ENCODE measurements at regions of chr1 and their contacts with region 1.

Region 1: GRCh38 chr1:150256554-150257341 is 826 bp upstream of the CA14 start:
- DNase-seq: no peak
- H3K4me3 ChIP-seq: no peak overlapping the region
- H3K4me3 Mint-ChIP-seq: peak overlapping the region in 1 of 7 donors; percentile 16
- H3K27ac ChIP-seq: no peak overlapping the region
- H3K27ac Mint-ChIP-seq: peak overlapping the region in 1 of 8 donors; percentile 14
- H3K4me1 ChIP-seq: peaks cover 12% of the 10 kb centered on the region
- H3K4me1 Mint-ChIP-seq: peaks cover 12 to 18% (median 14%) of the 10 kb centered on the region in 3 donors
- H3K27me3 ChIP-seq: peaks cover 16% of the 10 kb centered on the region
- H3K27me3 Mint-ChIP-seq: peaks cover 37 to 45% of the 10 kb centered on the region in 2 donors

Region 2: GRCh38 chr1:150127868-150128267 is 128.9 kb before region 1 on chr1:
- CTCF ChIA-PET with region 1: no interaction called
- POLR2A ChIA-PET with region 1: no interaction called
- DNase-seq: no peak
- H3K4me3 ChIP-seq: no peak overlapping the region
- H3K4me3 Mint-ChIP-seq: no peak overlapping the region
- H3K27ac ChIP-seq: no peak overlapping the region
- H3K27ac Mint-ChIP-seq: peak overlapping the region in 1 of 8 donors; percentile 40
- H3K4me1 ChIP-seq: no peaks in the 10 kb centered on the region
- H3K4me1 Mint-ChIP-seq: peaks cover 0 to 13% (median 4%) of the 10 kb centered on the region in 3 donors
- H3K27me3 ChIP-seq: no peaks in the 10 kb centered on the region
- H3K27me3 Mint-ChIP-seq: no peaks in the 10 kb centered on the region

Region 3: GRCh38 chr1:150268705-150269403 is 12.1 kb after region 1 on chr1 and contains the start of gene APH1A:
- CTCF ChIA-PET with region 1: interaction called, 32 read pairs
- POLR2A ChIA-PET with region 1: no interaction called
- DNase-seq: peak; percentile 87 to 95 (median 88)
- H3K4me3 ChIP-seq: peak within 1 kb of the TSS; percentile 77
- H3K4me3 Mint-ChIP-seq: peak within 1 kb of the TSS; percentile 91 to 98 (median 93)
- H3K27ac ChIP-seq: peak within 1 kb of the TSS; percentile 94
- H3K27ac Mint-ChIP-seq: peak within 1 kb of the TSS; percentile 88 to 100 (median 97)
- H3K4me1 ChIP-seq: peaks cover 24% of the 10 kb centered on the region
- H3K4me1 Mint-ChIP-seq: peaks cover 24 to 35% (median 32%) of the 10 kb centered on the region in 3 donors
- H3K27me3 ChIP-seq: no peaks in the 10 kb centered on the region
- H3K27me3 Mint-ChIP-seq: peaks cover 0 to 5% of the 10 kb centered on the region in 2 donors
- total RNA-seq, gene APH1A: 139 to 140 TPM

Region 4: GRCh38 chr1:150281837-150282653 is 25.3 kb after region 1 on chr1 and contains the start of gene CIART:
- CTCF ChIA-PET with region 1: interaction called, 11 read pairs
- POLR2A ChIA-PET with region 1: no interaction called
- DNase-seq: peak; percentile 48 to 90 (median 78)
- H3K4me3 ChIP-seq: peak within 1 kb of the TSS; percentile 67
- H3K4me3 Mint-ChIP-seq: peak within 1 kb of the TSS; percentile 79 to 94 (median 87)
- H3K27ac ChIP-seq: peak within 1 kb of the TSS; percentile 22
- H3K27ac Mint-ChIP-seq: peak within 1 kb of the TSS; percentile 71 to 98 (median 94)
- H3K4me1 ChIP-seq: peaks cover 27% of the 10 kb centered on the region
- H3K4me1 Mint-ChIP-seq: peaks cover 25 to 31% (median 27%) of the 10 kb centered on the region in 3 donors
- H3K27me3 ChIP-seq: no peaks in the 10 kb centered on the region
- H3K27me3 Mint-ChIP-seq: no peaks in the 10 kb centered on the region
- total RNA-seq, gene CIART: 0.81 to 1.7 TPM

Region 5: DNA sequence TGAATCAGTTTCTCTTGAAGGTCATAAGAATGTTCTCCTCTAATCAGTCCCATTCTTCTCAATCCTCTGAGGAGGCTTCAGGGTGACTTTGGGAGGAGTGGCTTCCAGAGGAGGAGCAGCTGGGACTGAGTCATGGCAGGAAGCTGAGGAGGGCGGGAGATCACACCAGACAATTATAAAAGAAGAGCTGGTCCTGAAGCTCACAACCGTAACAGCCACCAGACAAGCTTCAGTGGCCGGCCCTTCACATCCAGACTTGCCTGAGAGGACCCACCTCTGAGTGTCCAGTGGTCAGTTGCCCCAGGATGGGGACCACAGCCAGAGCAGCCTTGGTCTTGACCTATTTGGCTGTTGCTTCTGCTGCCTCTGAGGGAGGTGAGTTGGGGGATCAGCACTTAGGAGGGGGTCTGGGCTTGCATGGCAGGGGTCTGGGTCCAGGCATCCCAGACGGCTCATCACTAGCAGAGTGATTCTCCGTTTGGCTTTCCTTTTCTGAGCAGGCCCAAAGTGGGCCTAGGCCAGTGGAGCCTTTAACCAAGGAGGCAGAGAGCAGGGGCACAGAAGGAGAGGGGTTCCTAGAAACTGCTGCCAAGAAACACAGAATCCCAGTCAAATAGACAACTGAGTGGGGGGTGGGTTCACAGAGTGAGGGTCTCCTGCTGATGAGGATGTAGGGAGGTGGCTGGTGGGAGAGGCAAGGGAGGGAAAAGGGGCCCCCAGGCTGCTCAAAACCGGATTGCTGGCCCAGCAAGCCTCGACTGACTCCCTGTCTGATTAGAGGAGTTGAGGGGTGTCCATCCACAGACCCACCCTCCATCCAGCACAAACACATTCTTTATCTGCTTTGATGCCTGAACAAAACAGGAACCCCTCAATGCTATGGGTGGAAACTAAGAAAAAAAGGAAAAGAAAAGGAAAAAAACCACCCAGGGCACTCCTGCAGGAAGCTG is 251.4 kb after region 1 on chr1 and contains the start of gene ECM1:
- CTCF ChIA-PET with region 1: no interaction called
- POLR2A ChIA-PET with region 1: no interaction called
- DNase-seq: no peak
- H3K4me3 ChIP-seq: no peak within 1 kb of the TSS
- H3K4me3 Mint-ChIP-seq: no peak within 1 kb of the TSS
- H3K27ac ChIP-seq: peak within 1 kb of the TSS; percentile 47
- H3K27ac Mint-ChIP-seq: peak within 1 kb of the TSS in 3 of 8 donors; percentile 26 to 70 (median 27)
- H3K4me1 ChIP-seq: no peaks in the 10 kb centered on the region
- H3K4me1 Mint-ChIP-seq: peaks cover 5 to 6% (median 6%) of the 10 kb centered on the region in 3 donors
- H3K27me3 ChIP-seq: no peaks in the 10 kb centered on the region
- H3K27me3 Mint-ChIP-seq: peaks cover 0 to 2% of the 10 kb centered on the region in 2 donors
- total RNA-seq, gene ECM1: 1.3 to 1.5 TPM

Measured in CD8-positive, alpha-beta memory T cell (primary cell).